OCI-LY7 (cell line): ENCODE measurements at regions of chr1 and their contacts with region 1.

Region 1: DNA sequence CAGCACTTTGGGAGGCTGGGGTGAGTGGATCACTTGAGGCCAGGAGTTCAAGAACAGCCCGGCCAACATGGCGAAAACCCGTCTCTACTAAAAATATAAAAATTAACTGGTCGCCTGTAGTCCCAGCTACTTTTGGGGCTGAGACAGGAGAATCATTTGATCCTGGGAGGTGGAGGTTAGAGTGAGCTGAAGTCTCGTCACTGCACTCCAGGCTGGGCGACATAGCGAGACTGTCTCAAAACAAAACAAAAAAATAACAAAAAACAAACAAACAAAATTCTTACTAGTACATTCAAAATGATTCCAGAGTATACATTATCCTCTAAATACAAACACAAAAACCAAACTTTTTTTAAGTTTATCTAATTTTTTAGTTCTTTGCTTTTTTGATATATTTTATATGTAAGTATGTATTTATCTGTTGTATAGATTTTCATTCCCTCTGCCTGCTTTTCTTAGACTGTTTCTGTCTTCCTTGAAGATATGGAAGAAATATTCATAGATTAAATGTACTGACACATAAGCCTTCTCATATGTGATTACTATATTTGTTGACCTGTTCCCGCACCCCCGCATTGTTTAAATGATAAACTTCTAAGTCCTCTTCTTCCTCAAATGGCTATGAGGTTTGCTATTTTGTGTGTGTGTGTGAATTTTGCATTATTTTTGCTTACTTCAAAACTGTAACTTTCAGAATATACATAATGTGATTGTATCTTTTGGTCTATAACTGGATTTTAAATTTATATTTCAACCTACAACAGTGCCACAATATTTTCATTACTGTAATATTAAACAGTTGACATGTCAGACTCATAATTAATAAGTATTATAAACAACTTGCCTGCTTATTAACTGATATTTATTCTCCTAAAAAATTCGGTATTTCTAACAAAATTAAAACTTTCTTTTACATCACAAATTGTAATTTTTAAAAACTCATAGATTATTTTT is 1674.1 kb upstream of the B3GALT2 start:
- DNase-seq: no peak
- H3K4me3 ChIP-seq: no peak overlapping the region
- H3K27ac ChIP-seq: no peak overlapping the region
- H3K4me1 ChIP-seq: peaks cover 6% of the 10 kb centered on the region
- CTCF ChIP-seq: no peak

Region 2: GRCh38 chr1:194809665-194810064 is 50.9 kb before region 1 on chr1:
- CTCF ChIA-PET with region 1: no interaction called
- POLR2A ChIA-PET with region 1: no interaction called
- intact Hi-C with region 1: loop called (anchors 5 kb)
- DNase-seq: peak; percentile 15
- H3K4me3 ChIP-seq: no peak overlapping the region
- H3K27ac ChIP-seq: no peak overlapping the region
- H3K4me1 ChIP-seq: no peaks in the 10 kb centered on the region
- CTCF ChIP-seq: no peak